ENCODE measurements at regions of chr12 and their contacts with region 1.

Region 1: DNA sequence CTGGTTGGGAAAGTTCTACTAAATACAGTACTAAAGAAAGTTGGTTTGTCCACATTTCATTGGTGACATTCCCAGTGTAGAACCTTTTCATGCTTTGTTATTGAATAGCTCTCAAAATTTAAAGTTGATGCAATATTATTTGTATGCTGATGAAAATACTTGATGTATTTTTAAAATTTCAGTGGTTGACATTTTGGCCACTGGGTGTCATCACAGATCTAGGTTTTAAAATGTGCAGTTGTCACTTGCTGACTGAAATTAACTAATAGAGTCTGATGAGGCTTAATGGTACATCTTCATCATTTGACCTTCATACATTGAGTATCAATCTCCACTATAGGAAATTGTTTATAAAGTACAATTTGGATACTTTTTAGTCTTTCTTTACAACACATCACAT is 37.1 kb downstream of the CMAS start:
- DNase-seq: no peak
- ATAC-seq: peak in 3 of 8 donors; percentile 38 to 42 (median 41)
- H3K4me3 ChIP-seq: no peak overlapping the region
- H3K27ac ChIP-seq: no peak overlapping the region
- H3K4me1 ChIP-seq: no peaks in the 10 kb centered on the region
- H3K27me3 ChIP-seq: no peaks in the 10 kb centered on the region
- CTCF ChIP-seq: peak in 8 of 9 donors; percentile 21 to 68 (median 58)

Region 2: GRCh38 chr12:21788089-21788983 is 294.8 kb before region 1 on chr12:
- intact Hi-C with region 1: no loop called
- DNase-seq: no peak
- ATAC-seq: peak in 3 of 8 donors; percentile 51 to 67 (median 61)
- H3K4me3 ChIP-seq: no peak overlapping the region
- H3K27ac ChIP-seq: peak overlapping the region in 2 of 10 donors; percentile 1 to 7
- H3K4me1 ChIP-seq: peaks cover 0 to 25% (median 10%) of the 10 kb centered on the region in 9 donors
- H3K27me3 ChIP-seq: no peaks in the 10 kb centered on the region
- CTCF ChIP-seq: no peak

Region 3: GRCh38 chr12:21962236-21962635 is 120.9 kb before region 1 on chr12:
- intact Hi-C with region 1: no loop called
- DNase-seq: no peak
- ATAC-seq: no peak
- H3K4me3 ChIP-seq: no peak overlapping the region
- H3K27ac ChIP-seq: no peak overlapping the region
- H3K4me1 ChIP-seq: no peaks in the 10 kb centered on the region
- H3K27me3 ChIP-seq: no peaks in the 10 kb centered on the region
- CTCF ChIP-seq: no peak

Region 4: GRCh38 chr12:22223356-22223755 is 140.2 kb after region 1 on chr12:
- intact Hi-C with region 1: no loop called
- DNase-seq: no peak
- ATAC-seq: no peak
- H3K4me3 ChIP-seq: no peak overlapping the region
- H3K27ac ChIP-seq: no peak overlapping the region
- H3K4me1 ChIP-seq: peaks cover 0 to 9% (median 0%) of the 10 kb centered on the region in 9 donors
- H3K27me3 ChIP-seq: no peaks in the 10 kb centered on the region
- CTCF ChIP-seq: no peak

Region 5: DNA sequence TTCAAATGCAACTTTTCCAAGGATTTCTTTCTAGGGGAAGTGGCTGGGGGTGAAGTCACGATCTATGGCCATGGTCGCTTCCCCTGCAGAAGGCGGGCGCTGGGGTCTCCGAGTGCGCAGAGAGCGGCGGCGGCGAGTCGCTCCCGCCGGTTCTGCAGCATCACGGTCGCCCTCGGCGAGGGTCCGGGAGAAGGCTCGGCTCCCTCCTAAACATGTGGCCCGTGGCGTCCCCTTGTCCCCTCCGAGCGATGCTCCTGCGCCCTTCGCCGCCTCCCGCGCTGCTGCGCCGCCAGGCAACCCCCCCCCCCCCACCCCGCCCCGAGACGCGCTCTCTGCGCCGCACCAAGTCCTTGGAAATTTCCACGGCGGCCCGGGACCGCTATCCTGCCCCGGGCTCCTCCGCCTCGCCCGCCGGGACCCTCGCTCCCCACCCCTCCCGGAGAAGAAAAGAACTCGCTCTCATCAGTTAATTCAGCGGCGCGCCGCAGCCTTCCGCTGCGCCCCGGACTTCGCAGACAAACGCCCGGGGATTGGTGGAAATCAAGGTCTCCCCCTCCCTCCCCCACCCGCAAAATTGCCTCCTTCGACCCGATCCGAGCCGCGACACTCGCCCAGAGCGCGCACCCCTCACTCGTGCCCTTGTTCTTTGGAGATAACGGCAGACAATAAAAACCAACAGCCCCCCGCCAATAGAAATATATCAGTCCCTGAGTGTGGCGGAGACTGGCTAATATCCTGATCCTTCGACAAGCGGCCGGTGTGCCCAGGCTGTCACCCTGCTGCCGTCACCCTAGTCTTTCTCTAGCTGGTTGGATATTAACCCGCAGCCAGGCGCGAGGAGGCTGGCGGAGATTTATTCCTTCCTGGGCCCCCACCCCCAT is 251.5 kb after region 1 on chr12 and contains the start of gene ST8SIA1:
- intact Hi-C with region 1: loop called in 4 of 10 experiments (anchors 5 kb)
- DNase-seq: peak; percentile 29 to 50
- ATAC-seq: peak; percentile 55 to 66 (median 60)
- H3K4me3 ChIP-seq: peak within 1 kb of the TSS; percentile 52 to 72 (median 62)
- H3K27ac ChIP-seq: peak within 1 kb of the TSS in 9 of 10 donors; percentile 7 to 75 (median 54)
- H3K4me1 ChIP-seq: peaks cover 0 to 16% (median 6%) of the 10 kb centered on the region in 9 donors
- H3K27me3 ChIP-seq: peaks cover 0 to 46% (median 16%) of the 10 kb centered on the region in 7 donors
- CTCF ChIP-seq: no peak
- total RNA-seq, gene ST8SIA1: 1.0 to 4.9 (median 2.0) TPM

Region 6: DNA sequence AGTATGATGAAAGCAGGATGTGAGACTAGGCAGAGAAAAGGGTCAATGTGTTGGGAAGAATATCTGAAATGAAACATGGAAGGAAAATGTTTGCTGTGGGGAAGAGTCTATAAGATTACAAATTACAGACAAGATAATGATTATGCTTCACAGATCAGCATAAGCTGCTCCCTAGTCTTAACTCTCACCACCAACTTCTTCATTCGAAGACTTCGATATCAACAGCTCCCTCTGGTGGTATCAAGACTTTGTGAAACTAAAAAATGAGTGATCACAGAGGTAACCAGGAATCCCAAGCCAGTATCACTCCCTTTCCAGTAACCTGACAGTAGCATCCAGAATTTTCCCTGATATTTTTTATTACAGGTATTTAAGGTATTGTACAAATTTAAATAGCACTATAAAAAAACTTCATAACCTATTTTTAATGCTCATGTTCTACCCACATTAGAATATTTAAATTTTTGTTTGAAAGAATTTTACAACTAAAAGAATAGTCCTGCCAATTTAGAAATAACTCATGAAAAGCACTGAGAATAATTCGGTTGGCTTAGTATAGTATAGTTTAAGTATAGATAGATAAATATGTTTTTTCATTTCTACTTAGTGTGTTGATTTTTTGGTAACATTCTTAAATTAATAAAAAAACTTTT is 376.8 kb after region 1 on chr12:
- intact Hi-C with region 1: loop called in 4 of 10 experiments (anchors 5 kb)
- DNase-seq: no peak
- ATAC-seq: peak in 2 of 8 donors; percentile 24 to 37
- H3K4me3 ChIP-seq: no peak overlapping the region
- H3K27ac ChIP-seq: no peak overlapping the region
- H3K4me1 ChIP-seq: no peaks in the 10 kb centered on the region
- H3K27me3 ChIP-seq: no peaks in the 10 kb centered on the region
- CTCF ChIP-seq: peak in 8 of 9 donors; percentile 35 to 74 (median 63)

Region 7: DNA sequence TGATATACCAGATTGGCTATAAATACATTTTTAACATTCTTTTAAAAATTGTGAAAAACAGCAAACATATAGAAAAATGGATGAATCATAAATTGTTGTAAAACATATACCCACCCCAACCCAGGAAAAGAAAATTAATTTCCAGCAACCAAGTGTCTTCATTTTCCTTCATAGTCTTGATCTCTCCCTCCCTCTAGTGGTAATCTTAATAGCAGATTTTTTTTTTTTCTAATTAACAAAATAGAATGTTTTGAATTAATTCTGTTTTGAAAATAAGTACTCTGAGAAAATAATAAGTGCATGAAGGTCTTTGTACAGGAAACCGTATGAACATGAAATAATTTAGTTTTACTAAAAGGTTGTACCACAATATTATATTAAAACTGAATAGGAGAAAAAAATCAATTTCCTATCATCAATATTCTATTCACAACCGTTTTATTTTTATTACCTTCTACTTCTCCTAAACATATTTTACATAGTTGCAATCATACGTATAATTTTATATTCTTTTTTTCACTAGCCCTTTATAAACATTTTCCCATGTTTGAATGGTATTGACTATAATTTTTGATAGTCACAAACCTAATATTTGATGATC is 548.8 kb after region 1 on chr12:
- intact Hi-C with region 1: loop called in 1 of 10 experiments (anchors 10 kb)
- DNase-seq: no peak
- ATAC-seq: no peak
- H3K4me3 ChIP-seq: no peak overlapping the region
- H3K27ac ChIP-seq: no peak overlapping the region
- H3K4me1 ChIP-seq: peaks cover 0 to 55% (median 27%) of the 10 kb centered on the region in 9 donors
- H3K27me3 ChIP-seq: no peaks in the 10 kb centered on the region
- CTCF ChIP-seq: peak; percentile 41 to 80 (median 70)